A673 (cell line): ENCODE measurements at regions of chr2 and their contacts with region 1.

Region 1: DNA sequence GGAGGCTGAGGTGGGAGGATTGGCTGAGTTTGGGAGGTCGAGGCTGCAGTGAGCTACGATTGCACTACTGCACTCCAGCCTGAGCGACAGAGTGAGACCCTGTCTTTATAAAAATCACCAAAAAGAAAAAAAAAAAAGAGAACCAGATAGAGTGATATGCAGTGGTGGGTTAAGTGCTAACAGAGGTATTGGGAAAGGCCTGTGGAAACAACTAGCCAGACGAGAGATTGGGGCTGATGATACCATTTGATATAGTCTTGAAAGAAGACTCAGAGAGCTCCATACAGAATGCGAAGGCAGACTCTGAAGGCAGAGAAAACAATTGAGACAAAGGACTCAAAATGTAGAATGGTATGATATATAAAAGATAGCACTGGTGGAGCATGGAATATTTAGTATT is 134.1 kb downstream of the CDC42EP3 start:
- DNase-seq: no peak
- H3K4me3 ChIP-seq: no peak overlapping the region
- H3K27ac ChIP-seq: no peak overlapping the region
- H3K4me1 ChIP-seq: no peaks in the 10 kb centered on the region
- H3K27me3 ChIP-seq: no peaks in the 10 kb centered on the region
- CTCF ChIP-seq: no peak

Region 2: DNA sequence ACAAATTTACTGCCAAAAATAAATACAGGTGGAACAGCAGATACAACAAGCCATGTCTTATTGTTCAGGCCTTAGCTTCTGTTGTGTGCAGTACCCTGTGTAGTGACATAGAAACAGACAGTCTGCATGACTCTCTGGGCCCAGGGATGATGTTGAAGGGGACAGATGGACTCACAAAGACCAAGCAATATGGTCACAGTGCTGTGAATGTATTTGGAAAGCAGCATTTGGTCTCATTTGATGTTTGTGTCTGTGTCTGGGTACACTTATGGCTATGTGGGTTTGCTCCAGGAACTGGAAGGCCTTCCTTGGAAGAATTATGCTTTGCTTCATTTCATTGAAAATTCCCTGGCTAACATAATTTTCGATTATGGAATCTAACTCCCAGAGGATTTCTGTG is 24.3 kb before region 1 on chr2:
- CTCF ChIA-PET with region 1: no interaction called
- POLR2A ChIA-PET with region 1: no interaction called
- intact Hi-C with region 1: no loop called
- DNase-seq: no peak
- H3K4me3 ChIP-seq: no peak overlapping the region
- H3K27ac ChIP-seq: no peak overlapping the region
- H3K4me1 ChIP-seq: no peaks in the 10 kb centered on the region
- H3K27me3 ChIP-seq: no peaks in the 10 kb centered on the region
- CTCF ChIP-seq: no peak

Region 3: GRCh38 chr2:37585040-37585908 is 48.0 kb after region 1 on chr2:
- CTCF ChIA-PET with region 1: no interaction called
- POLR2A ChIA-PET with region 1: no interaction called
- intact Hi-C with region 1: no loop called
- DNase-seq: no peak
- H3K4me3 ChIP-seq: no peak overlapping the region
- H3K27ac ChIP-seq: no peak overlapping the region
- H3K4me1 ChIP-seq: peaks cover 55% of the 10 kb centered on the region
- H3K27me3 ChIP-seq: no peaks in the 10 kb centered on the region
- CTCF ChIP-seq: no peak

Region 4: DNA sequence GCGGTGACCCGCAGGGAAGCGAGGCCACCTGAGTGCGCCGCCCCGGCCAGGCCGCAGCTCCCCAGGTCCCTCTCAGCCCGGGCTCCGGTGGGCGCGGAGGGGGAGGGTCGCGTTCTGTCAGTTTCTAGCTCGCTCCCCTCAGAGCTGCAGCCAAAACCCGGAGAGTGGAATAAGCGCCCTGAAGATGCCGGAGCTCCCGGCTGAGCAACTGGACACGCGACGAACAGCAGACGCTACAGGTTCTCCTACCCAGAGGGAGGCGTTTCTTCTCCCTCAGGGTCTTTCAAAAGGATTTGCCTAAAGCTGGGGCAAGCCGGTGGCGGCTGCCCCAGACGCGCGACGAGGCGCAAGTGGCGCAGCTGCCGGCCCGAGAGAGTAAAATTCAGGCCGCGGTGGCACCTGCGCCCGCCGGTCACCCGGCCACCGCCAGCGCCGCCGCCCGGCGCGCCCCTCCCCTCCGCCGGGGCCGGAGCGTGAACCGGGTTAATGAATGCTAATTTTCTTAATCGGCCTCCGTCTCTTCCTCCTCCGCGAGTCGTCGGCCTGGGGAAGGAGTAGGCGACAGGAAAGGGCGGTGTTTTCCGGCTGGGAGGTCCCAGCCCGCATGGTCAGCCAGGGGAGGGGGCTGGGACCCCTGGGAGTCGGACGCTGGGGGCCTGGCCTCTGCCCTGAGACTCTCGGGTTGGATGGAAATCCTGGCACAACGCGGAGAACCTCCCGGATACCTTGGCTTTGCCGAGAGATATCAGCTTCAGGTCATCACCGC is 135.0 kb after region 1 on chr2:
- CTCF ChIA-PET with region 1: interaction called, 5 read pairs
- POLR2A ChIA-PET with region 1: no interaction called
- intact Hi-C with region 1: loop called (anchors 5 kb)
- DNase-seq: peak; percentile 87
- H3K4me3 ChIP-seq: peak overlapping the region; percentile 93
- H3K27ac ChIP-seq: peak overlapping the region; percentile 60
- H3K4me1 ChIP-seq: peaks cover 9% of the 10 kb centered on the region
- H3K27me3 ChIP-seq: no peaks in the 10 kb centered on the region
- CTCF ChIP-seq: no peak